ENCODE measurements at regions of chr3 and their contacts with region 1.

Region 1: DNA sequence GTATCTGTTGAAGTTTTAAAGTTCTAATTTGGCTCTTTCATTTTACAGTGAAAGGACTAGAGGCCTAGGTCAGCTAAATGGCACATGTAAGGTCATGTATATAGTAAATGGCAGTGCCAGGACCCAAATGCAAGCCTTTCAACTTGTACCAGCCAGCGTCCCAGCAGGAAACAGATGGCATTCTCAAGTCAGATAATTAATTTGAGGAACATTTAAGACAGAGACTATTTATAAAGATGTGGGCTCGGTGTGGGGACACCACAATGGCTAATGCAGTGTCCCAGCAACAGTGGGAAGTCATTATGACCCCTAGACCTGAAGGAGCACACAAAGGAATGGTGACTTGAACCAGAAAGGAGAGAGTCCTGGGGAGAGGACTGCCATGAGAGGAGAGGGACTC is 6.1 kb downstream of the MINDY4B start:
- DNase-seq: no peak
- ATAC-seq: no peak
- H3K4me3 ChIP-seq: no peak overlapping the region
- H3K27ac ChIP-seq: no peak overlapping the region
- H3K4me1 ChIP-seq: no peaks in the 10 kb centered on the region
- H3K27me3 ChIP-seq: peaks cover 26% of the 10 kb centered on the region
- CTCF ChIP-seq: no peak
- POLR2A ChIP-seq: no peak
- RAD21 ChIP-seq: no peak

Region 2: GRCh38 chr3:150913133-150913922 is 14.2 kb after region 1 on chr3:
- CTCF ChIA-PET with region 1: no interaction called
- POLR2A ChIA-PET with region 1: interaction called, 11 read pairs
- dilution Hi-C with region 1: no loop called
- in situ Hi-C with region 1: no loop called
- intact Hi-C with region 1: no loop called
- DNase-seq: no peak
- ATAC-seq: no peak
- H3K4me3 ChIP-seq: no peak overlapping the region
- H3K27ac ChIP-seq: no peak overlapping the region
- H3K4me1 ChIP-seq: no peaks in the 10 kb centered on the region
- H3K27me3 ChIP-seq: peaks cover 16% of the 10 kb centered on the region
- CTCF ChIP-seq: no peak
- POLR2A ChIP-seq: no peak
- RAD21 ChIP-seq: no peak